Heart left ventricle (tissue), 16 donors: ENCODE measurements at regions of chr1 and their contacts with region 1.

Region 1: GRCh38 chr1:245045087-245045881 is 109.5 kb upstream of the KIF26B start:
- DNase-seq: peak in 3 of 5 donors; percentile 51 to 79 (median 57)
- ATAC-seq: peak; percentile 45 to 85 (median 60)
- H3K4me3 ChIP-seq: peak overlapping the region in 1 of 12 donors; percentile 12
- H3K27ac ChIP-seq: peak overlapping the region in 4 of 12 donors; percentile 17 to 45 (median 38)
- H3K4me1 ChIP-seq: peaks cover 0 to 28% (median 7%) of the 10 kb centered on the region in 12 donors
- H3K27me3 ChIP-seq: no peaks in the 10 kb centered on the region
- CTCF ChIP-seq: no peak
- POLR2A ChIP-seq: peak in 1 of 2 donors; percentile 12

Region 2: GRCh38 chr1:244599937-244600350 is 445.3 kb before region 1 on chr1:
- intact Hi-C with region 1: loop called (anchors 2 to 10 kb)
- DNase-seq: no peak
- ATAC-seq: peak in 1 of 4 donors; percentile 53
- H3K4me3 ChIP-seq: no peak overlapping the region
- H3K27ac ChIP-seq: no peak overlapping the region
- H3K4me1 ChIP-seq: peaks cover 0 to 10% (median 0%) of the 10 kb centered on the region in 12 donors
- H3K27me3 ChIP-seq: peaks cover 0 to 5% (median 0%) of the 10 kb centered on the region in 9 donors
- CTCF ChIP-seq: no peak
- POLR2A ChIP-seq: no peak

Region 3: DNA sequence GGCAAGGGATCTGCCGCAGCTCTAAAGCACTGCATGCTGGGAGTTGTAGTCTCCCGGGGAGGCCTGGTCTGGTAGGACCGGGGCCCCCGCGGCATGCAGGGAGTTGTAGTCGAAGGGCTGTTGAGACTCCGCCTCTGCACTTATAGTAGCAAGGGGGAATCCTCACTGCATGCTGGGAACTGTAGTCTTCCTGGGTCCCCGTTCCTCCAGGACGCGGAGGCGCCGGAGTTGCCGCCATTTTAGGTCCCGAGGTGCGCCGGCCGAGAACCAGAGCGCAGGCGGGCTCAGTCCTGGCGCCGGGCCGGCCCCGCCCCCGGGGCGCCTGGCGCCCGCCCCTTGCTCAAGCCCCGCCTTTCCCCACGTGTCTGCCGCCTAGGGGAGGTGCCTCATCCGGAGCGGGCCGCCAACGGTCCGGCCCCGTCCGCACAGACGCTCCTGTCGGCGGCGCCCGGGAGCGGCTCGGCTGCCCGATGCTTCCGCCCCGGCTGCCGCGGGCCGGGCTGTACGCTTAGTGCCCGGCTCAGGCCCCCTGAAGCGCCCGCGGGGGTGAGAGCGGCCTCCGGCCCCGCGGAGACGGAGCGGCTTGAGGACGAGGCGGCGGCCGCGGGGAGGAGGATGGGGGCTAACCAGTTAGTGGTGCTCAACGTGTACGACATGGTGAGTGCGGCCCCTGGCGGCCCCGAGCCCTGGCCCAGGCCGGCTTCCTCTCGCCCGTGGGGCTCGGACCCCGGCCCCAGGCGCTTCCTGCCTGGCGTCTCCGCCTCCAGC is 392.4 kb before region 1 on chr1 and contains the start of gene DESI2:
- intact Hi-C with region 1: loop called in 1 of 10 experiments (anchors 2 kb)
- DNase-seq: peak; percentile 98 to 99 (median 99)
- ATAC-seq: peak; percentile 97 to 99 (median 98)
- H3K4me3 ChIP-seq: peak within 1 kb of the TSS; percentile 51 to 99 (median 88)
- H3K27ac ChIP-seq: peak within 1 kb of the TSS; percentile 83 to 98 (median 96)
- H3K4me1 ChIP-seq: peaks cover 4 to 48% (median 31%) of the 10 kb centered on the region in 12 donors
- H3K27me3 ChIP-seq: no peaks in the 10 kb centered on the region
- CTCF ChIP-seq: peak; percentile 32 to 77 (median 58)
- POLR2A ChIP-seq: peak; percentile 87 to 98
- total RNA-seq, gene DESI2: 18.7 to 34.2 (median 23.1) TPM

Region 4: GRCh38 chr1:244804841-244805240 is 240.4 kb before region 1 on chr1:
- intact Hi-C with region 1: loop called (anchors 1 to 5 kb)
- DNase-seq: no peak
- ATAC-seq: no peak
- H3K4me3 ChIP-seq: no peak overlapping the region
- H3K27ac ChIP-seq: no peak overlapping the region
- H3K4me1 ChIP-seq: peaks cover 0 to 4% (median 0%) of the 10 kb centered on the region in 12 donors
- H3K27me3 ChIP-seq: no peaks in the 10 kb centered on the region
- CTCF ChIP-seq: no peak
- POLR2A ChIP-seq: no peak

Region 5: GRCh38 chr1:244864253-244865027 is 180.8 kb before region 1 on chr1 and contains the start of gene HNRNPU:
- intact Hi-C with region 1: loop called in 6 of 10 experiments (anchors 2 to 10 kb)
- DNase-seq: peak; percentile 97 to 99 (median 98)
- ATAC-seq: peak; percentile 89 to 96 (median 93)
- H3K4me3 ChIP-seq: peak within 1 kb of the TSS; percentile 88 to 100 (median 96)
- H3K27ac ChIP-seq: peak within 1 kb of the TSS; percentile 94 to 100 (median 100)
- H3K4me1 ChIP-seq: peaks cover 5 to 47% (median 40%) of the 10 kb centered on the region in 12 donors
- H3K27me3 ChIP-seq: no peaks in the 10 kb centered on the region
- CTCF ChIP-seq: peak in 7 of 12 donors; percentile 5 to 38 (median 32)
- POLR2A ChIP-seq: peak; percentile 75 to 97
- total RNA-seq, gene HNRNPU: 138 to 218 (median 169) TPM

Region 6: GRCh38 chr1:245099401-245099800 is 54.1 kb after region 1 on chr1:
- intact Hi-C with region 1: no loop called
- DNase-seq: no peak
- ATAC-seq: no peak
- H3K4me3 ChIP-seq: no peak overlapping the region
- H3K27ac ChIP-seq: no peak overlapping the region
- H3K4me1 ChIP-seq: peaks cover 0 to 3% (median 0%) of the 10 kb centered on the region in 12 donors
- H3K27me3 ChIP-seq: no peaks in the 10 kb centered on the region
- CTCF ChIP-seq: no peak
- POLR2A ChIP-seq: no peak

Region 7: DNA sequence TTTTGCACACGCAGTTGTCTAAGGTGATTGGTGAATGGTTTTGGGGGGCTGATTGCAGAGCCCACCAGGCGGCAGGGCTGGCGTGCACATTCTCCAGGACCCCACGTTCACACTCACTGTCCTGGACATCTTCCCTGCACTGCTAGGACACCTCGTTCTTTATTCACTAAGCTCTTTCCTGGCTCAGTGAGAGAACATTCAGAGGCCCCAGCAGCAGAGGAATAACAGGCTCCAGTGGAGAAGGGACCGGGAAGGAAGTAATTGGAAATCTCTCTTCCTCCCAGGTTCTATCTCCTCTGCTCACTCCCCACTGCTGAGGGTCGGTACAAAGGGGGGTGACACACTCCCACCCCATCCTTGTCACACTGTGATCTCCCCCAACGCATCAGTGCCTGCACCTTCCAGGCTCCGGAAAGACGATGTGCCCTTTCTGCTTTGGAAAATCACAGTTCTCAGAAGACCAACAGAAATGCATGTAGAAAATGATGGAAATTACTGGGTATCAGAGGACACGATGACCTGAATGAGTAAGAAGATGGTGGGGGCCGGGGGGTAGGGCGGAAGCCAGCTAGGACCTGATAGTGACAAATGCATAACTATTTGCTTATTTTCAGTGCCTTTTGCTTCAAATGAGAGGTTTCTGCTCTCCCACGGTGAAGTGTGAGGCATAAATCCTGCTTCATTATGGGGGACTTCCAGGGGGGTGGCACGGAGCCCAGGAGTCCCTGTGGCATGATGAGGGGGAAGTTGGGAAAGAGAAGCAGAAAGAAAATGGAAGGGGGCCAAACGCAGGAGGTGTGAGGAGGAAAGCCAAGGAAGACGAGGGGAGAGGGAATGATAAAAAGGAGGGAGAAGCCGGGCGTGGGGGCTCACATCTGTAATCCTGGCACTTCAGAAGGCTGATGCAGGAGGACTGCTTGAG is 84.3 kb after region 1 on chr1:
- intact Hi-C with region 1: no loop called
- DNase-seq: no peak
- ATAC-seq: no peak
- H3K4me3 ChIP-seq: no peak overlapping the region
- H3K27ac ChIP-seq: no peak overlapping the region
- H3K4me1 ChIP-seq: peaks cover 0 to 10% (median 0%) of the 10 kb centered on the region in 12 donors
- H3K27me3 ChIP-seq: peaks cover 0 to 17% (median 0%) of the 10 kb centered on the region in 9 donors
- CTCF ChIP-seq: no peak
- POLR2A ChIP-seq: no peak

Region 8: DNA sequence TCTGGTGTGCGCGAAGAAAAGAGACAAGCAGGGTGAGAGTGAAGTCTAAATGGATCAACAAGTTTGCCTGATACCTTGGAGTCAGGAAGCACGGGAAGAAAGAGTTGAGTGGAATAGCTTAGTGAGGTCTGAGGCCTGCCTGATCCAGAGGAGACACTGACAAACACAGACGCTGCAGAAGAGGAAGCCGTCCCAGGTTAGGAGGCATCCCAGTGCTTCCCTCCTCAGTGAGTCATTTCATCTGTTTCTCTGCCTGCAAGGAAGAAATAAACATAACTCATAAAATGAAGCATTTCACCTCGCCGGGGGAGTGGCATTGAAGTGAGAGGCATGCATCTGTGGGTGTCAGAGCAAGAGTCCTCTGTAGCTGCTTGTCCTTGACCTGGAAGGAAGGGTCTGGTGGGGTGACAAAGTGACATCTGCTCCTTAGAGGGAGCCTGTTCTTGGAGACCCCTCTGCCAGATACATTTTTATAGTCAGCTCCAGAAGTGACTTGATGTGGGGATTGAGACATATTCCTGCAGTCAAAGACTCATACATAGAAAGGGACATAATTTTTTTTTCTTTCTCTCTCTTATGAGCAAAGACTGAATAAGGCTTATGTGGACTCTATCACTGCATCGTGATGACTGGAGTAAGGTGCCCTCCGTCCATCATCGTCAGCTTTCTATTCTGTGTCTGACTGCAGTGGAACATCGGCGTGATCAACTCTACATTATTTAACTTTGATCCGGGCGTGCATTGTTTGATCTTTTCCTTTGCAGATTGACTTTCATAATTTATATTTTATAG is 366.2 kb after region 1 on chr1:
- intact Hi-C with region 1: no loop called
- DNase-seq: no peak
- ATAC-seq: no peak
- H3K4me3 ChIP-seq: no peak overlapping the region
- H3K27ac ChIP-seq: no peak overlapping the region
- H3K4me1 ChIP-seq: no peaks in the 10 kb centered on the region
- H3K27me3 ChIP-seq: no peaks in the 10 kb centered on the region
- CTCF ChIP-seq: no peak
- POLR2A ChIP-seq: no peak